SK-N-SH (cell line): ENCODE measurements at regions of chr17 and their contacts with region 1.

Region 1: DNA sequence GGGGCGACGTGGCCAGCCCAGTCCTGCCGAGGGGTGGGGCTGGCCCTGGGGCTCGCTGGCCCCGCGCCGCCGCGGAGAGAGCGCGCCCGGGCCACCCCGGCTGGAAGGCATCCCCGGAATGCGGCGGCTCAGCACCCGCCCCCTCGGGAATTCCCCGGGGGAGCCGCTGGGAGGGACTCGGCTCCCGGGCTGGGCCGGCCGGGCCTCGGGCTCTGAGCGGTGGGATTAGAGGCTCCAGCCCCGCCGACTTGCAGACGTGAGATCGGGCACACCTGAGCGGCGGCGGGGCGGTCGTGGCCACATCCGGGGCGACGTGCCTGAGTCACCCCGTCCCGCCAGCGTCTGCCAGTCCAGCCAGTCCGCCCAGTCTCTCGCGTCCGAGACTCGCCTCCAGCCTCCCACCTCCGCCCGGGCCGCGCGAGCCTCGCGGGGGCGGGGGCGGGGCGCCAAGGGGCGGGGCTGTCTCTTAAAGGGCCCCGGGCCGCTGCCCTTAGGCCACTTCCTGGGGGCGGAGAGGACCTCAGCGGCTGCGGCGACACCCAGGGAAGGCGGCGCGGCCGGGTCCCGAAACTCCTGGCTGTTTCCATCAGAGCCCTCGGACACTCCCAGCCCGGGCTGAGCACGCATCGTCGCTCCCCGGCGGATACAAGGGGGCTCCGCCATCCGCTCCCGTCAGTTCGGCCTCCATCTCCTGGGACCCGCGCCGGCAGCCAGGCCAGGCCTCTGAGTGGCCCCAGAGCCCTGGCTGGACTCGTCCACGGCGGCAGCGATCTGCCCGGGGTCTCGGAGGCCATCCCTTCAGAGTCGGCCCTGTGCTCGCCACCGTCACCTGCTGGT is at the start of gene KCTD11:
- DNase-seq: peak; percentile 89
- H3K4me3 ChIP-seq: peak within 1 kb of the TSS; percentile 69 to 97
- H3K27ac ChIP-seq: peak within 1 kb of the TSS; percentile 88 to 99
- H3K4me1 ChIP-seq: peaks cover 19 to 48% of the 10 kb centered on the region in 2 experiments; a peak in 2 of 4 replicates
- H3K27me3 ChIP-seq: no peaks in the 10 kb centered on the region
- CTCF ChIP-seq: no peak
- EP300 ChIP-seq: peak in 1 of 2 experiments; percentile 14; a peak in 1 of 4 replicates
- RAD21 ChIP-seq: no peak
- polyA plus RNA-seq, gene KCTD11: 9.5 and 12.1 TPM in 2 replicates

Region 2: GRCh38 chr17:7323731-7324437 is 28.0 kb before region 1 on chr17:
- CTCF ChIA-PET with region 1: interaction called, 55 read pairs
- POLR2A ChIA-PET with region 1: no interaction called
- DNase-seq: peak; percentile 90
- H3K4me3 ChIP-seq: no peak overlapping the region; a peak in 1 of 4 replicates
- H3K27ac ChIP-seq: no peak overlapping the region
- H3K4me1 ChIP-seq: peaks cover 0 to 7% of the 10 kb centered on the region in 2 experiments; a peak in 1 of 4 replicates
- H3K27me3 ChIP-seq: no peaks in the 10 kb centered on the region
- CTCF ChIP-seq: peak; percentile 82
- EP300 ChIP-seq: no peak
- RAD21 ChIP-seq: peak; percentile 57

Region 3: DNA sequence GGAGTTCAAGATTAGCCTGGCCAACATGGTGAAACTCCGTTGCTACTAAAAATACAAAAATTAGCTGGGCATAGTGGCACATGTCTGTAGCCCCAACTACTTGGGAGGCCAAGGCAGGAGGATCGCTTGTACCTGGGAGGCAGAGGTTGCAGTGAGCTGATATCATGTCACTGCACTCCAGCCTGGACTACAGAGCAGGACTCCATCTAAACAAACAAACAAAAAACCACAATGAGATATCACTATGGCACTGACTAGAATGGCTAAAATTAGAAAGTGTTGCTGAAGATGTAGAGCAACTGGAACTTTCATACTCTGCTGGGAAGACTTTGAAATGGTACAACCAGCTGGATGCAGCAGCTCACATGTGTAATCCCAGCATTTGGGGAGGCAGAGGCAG is 22.5 kb after region 1 on chr17:
- CTCF ChIA-PET with region 1: interaction called, 40 read pairs
- POLR2A ChIA-PET with region 1: no interaction called
- DNase-seq: no peak
- H3K4me3 ChIP-seq: no peak overlapping the region
- H3K27ac ChIP-seq: no peak overlapping the region
- H3K4me1 ChIP-seq: no peaks in the 10 kb centered on the region; a peak in 1 of 4 replicates
- H3K27me3 ChIP-seq: no peaks in the 10 kb centered on the region; the same call in 1 of the 2 replicates
- CTCF ChIP-seq: no peak
- EP300 ChIP-seq: no peak
- RAD21 ChIP-seq: no peak

Region 4: GRCh38 chr17:7403977-7404736 is 52.3 kb after region 1 on chr17 and contains the start of gene TMEM256:
- CTCF ChIA-PET with region 1: interaction called, 28 read pairs
- POLR2A ChIA-PET with region 1: interaction called, 4 read pairs
- DNase-seq: peak; percentile 93
- H3K4me3 ChIP-seq: peak within 1 kb of the TSS; percentile 78 to 91
- H3K27ac ChIP-seq: peak within 1 kb of the TSS; percentile 76 to 91
- H3K4me1 ChIP-seq: peaks cover 5 to 21% of the 10 kb centered on the region in 2 experiments; a peak in 2 of 4 replicates
- H3K27me3 ChIP-seq: no peaks in the 10 kb centered on the region
- CTCF ChIP-seq: no peak
- EP300 ChIP-seq: 0 out of 4 replicates have a peak, but pooled peaks of 1 of the 2 experiments have one; percentile 24
- RAD21 ChIP-seq: no peak
- polyA plus RNA-seq, gene TMEM256: 114 and 213 TPM in 2 replicates

Region 5: GRCh38 chr17:7484067-7484918 is 132.4 kb after region 1 on chr17 and contains the start of gene POLR2A:
- CTCF ChIA-PET with region 1: interaction called, 10 read pairs
- POLR2A ChIA-PET with region 1: interaction called, 3 read pairs
- DNase-seq: peak; percentile 98
- H3K4me3 ChIP-seq: peak within 1 kb of the TSS; percentile 85 to 100
- H3K27ac ChIP-seq: peak within 1 kb of the TSS; percentile 99
- H3K4me1 ChIP-seq: peaks cover 31 to 34% of the 10 kb centered on the region in 2 experiments
- H3K27me3 ChIP-seq: no peaks in the 10 kb centered on the region
- CTCF ChIP-seq: no peak
- EP300 ChIP-seq: peak in 1 of 2 experiments; percentile 2; a peak in 2 of 4 replicates
- RAD21 ChIP-seq: 0 out of 2 replicates have a peak, but pooled peaks have one; percentile 13
- polyA plus RNA-seq, gene POLR2A: 19.0 and 37.3 TPM in 2 replicates

Region 6: GRCh38 chr17:7561028-7561575 is 209.2 kb after region 1 on chr17:
- CTCF ChIA-PET with region 1: interaction called, 52 read pairs
- POLR2A ChIA-PET with region 1: interaction called, 4 read pairs
- DNase-seq: peak; percentile 93
- H3K4me3 ChIP-seq: peak overlapping the region; percentile 88 to 90
- H3K27ac ChIP-seq: peak overlapping the region; percentile 85 to 88
- H3K4me1 ChIP-seq: peaks cover 17 to 54% of the 10 kb centered on the region in 2 experiments
- H3K27me3 ChIP-seq: no peaks in the 10 kb centered on the region
- CTCF ChIP-seq: peak; percentile 73
- EP300 ChIP-seq: no peak
- RAD21 ChIP-seq: peak; percentile 84